Left cardiac atrium (tissue), 4 donors: ENCODE measurements at regions of chr15 and their contacts with region 1.

Region 1: DNA sequence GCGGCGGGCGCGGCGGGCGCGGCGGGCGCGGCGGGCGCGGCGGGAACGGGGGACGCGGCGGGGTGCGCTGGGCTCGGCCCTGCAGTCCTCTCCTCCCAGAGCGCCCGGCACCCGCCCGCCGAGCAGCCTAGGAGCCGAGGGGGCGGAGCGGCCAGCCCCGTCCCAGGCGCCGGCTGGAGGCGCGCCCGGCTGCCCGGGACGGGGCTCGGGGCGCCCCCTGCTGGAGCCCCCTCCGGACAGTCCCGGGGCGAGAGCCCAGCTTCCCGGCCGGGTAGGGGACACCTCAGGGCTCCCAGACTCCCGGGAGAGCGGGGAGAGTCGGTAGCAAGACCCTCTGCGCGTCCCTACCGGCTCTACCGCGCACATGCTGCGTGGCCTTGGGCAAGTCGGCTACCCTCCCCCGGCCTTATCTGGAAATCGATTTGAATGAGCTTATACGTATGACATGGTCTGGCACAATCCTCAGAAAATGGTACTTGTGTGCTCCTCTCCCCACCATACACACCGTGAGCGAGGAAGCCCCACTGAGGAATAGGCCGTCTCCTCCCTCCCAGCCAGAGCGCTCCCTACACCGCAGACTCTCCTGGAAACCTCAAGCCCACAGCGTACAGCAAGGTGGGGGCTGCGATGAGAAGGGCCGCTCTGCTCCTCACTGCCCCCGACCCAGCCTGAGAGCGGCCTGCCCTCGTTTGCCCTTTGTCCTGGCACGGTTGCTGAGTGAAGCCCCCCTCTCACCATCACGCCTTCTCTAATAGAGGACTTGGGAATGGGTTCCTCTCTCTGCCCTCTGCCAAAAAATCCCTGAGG is at the start of gene DAPK2:
- DNase-seq: peak; percentile 79
- ATAC-seq: peak; percentile 86 to 89
- total RNA-seq, gene DAPK2: 72.5 to 94.9 TPM

Region 2: GRCh38 chr15:63915873-63916771 is 130.4 kb before region 1 on chr15:
- intact Hi-C with region 1: loop called in 1 of 2 experiments (anchors 10 kb)
- DNase-seq: no peak
- ATAC-seq: peak; percentile 54 to 62

Region 3: DNA sequence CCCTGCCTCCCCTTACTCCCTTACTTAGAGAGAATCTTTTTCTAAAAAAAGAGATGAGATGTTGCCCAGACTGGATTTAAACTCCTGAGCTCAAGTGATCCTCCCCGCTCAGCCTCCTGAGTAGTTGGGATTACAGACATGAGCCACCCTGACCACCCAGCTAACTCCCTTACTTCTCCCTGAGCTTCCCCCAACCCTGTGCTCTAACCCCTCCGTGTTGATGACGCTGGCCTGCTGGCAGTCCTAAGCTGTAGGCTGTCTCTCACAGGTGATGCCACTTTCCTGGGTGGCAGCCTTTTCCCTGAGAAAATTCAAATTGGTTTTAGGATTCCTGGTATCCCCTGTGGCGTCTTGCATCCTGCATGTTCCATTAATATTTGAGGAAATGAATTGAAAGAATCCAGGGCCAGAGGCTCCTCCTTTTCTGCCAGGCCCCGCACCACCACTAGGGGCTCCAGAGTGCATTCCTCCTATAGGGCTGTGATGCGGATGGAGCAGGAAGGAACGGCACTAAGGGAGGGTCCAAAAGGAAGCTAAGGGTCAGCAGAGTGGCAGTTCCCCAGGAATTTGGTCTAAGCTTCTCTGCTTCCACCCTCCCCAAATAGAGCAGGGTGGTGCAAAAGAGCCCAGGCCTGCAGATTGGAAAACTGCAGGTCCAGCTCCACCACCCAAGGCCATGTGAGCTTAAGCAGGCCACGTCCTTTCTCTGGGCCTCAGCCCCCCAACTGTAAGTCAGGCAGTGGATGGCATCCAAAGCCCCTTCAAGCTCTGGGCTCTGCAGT is 101.4 kb before region 1 on chr15:
- intact Hi-C with region 1: loop called (anchors 10 kb)
- DNase-seq: peak; percentile 76
- ATAC-seq: peak; percentile 79 to 83

Region 4: GRCh38 chr15:63986751-63987341 is 59.7 kb before region 1 on chr15:
- intact Hi-C with region 1: loop called in 1 of 2 experiments (anchors 5 kb)
- DNase-seq: no peak
- ATAC-seq: no peak